ENCODE measurements at regions of chr5 and their contacts with region 1.

Region 1: DNA sequence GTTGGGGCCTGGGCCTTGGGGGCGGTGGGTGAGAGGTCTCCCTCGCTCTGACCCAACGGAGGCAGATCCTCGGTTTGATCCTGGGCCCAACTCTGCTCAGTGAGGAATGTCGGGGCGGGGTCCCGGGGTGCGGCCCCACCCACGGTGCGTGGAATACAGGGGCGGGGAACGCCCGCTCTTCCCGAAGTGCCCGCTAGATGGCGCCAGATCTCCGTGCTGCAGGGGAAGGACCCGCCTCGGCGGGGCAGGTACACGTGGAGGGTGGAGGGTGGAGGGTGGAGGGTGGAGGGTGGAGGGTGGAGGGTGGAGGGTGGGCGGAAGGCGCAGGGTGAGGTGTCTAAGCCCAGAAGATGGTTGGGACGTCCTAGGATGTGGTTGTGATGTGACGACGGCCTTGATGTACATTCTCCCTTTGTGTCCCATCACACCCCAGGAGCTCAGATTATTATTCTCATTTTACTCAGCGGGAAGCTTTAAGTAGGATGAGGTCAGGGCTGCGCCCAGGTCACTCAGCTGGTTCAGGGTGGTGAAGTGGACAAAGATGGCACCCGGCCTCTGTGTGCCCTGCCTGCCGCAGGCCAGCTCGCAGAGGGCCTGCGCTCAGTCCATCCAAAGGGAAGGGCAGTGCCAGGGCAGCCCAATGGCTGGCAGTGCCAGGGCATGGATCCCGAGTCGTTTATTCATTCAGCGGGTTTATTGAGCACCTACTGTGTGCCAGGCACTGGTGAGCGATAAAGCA is 9.4 kb upstream of the RPS14 start:
- DNase-seq: peak; percentile 88
- H3K4me3 ChIP-seq: peak overlapping the region in 2 of 4 donors; percentile 13 to 34
- H3K27ac ChIP-seq: peak overlapping the region in 2 of 4 donors; percentile 3 to 41
- H3K4me1 ChIP-seq: peaks cover 0 to 12% (median 8%) of the 10 kb centered on the region in 4 donors
- H3K27me3 ChIP-seq: no peaks in the 10 kb centered on the region
- CTCF ChIP-seq: peak; percentile 51 to 92 (median 60)
- EP300 ChIP-seq: no peak
- POLR2A ChIP-seq: no peak

Region 2: DNA sequence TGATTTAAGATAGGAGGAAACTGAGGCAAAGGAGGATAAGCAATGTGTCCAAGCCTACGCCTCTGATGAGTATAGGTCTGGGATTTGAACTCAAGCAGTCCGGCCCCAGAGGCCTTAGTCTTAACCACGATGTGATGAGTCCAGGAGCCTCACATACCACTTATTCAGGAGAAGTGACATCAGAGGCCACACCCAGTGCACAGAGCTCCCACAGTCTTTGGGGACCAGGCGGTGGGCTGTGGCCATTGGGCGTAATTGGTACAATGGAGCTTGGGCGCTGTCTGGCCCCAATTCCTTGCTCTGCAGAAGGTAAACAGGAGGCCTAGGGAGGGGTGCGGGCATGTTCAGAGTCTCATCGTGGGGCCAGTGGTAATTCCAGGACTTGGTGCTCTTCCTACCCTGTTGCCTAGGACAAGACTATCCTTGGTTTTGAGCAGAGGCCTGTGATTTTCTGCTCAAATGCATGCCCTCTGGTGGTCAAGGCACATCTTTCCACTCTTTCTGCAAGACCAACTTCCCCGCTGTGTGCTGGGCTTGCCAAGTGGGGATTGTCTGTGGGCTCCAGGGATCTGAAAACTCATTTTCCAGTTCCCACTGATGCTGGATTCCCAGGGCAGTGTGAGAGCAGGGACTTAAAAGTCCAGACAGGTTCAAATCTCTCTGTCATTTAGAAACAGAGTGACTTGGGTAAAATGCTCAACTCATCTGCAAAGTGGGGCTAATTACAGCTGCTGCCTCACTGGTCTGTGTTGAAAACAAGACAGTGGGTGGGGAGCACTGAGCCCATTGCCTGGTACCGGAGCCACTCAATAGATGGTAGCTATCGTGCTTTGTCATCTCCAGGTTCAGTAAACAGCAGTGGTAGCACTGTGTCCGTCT is 64.7 kb after region 1 on chr5:
- intact Hi-C with region 1: loop called (anchors 1 kb)
- DNase-seq: no peak
- H3K4me3 ChIP-seq: no peak overlapping the region
- H3K27ac ChIP-seq: peak overlapping the region; percentile 11 to 31 (median 22)
- H3K4me1 ChIP-seq: peaks cover 0 to 78% (median 54%) of the 10 kb centered on the region in 4 donors
- H3K27me3 ChIP-seq: no peaks in the 10 kb centered on the region
- CTCF ChIP-seq: peak; percentile 49 to 68 (median 64)
- EP300 ChIP-seq: no peak
- POLR2A ChIP-seq: no peak

Region 3: GRCh38 chr5:150544611-150545219 is 85.7 kb after region 1 on chr5:
- intact Hi-C with region 1: loop called (anchors 2 kb)
- DNase-seq: peak; percentile 80
- H3K4me3 ChIP-seq: no peak overlapping the region
- H3K27ac ChIP-seq: no peak overlapping the region
- H3K4me1 ChIP-seq: peaks cover 0 to 24% (median 21%) of the 10 kb centered on the region in 4 donors
- H3K27me3 ChIP-seq: no peaks in the 10 kb centered on the region
- CTCF ChIP-seq: peak; percentile 18 to 83 (median 67)
- EP300 ChIP-seq: no peak
- POLR2A ChIP-seq: no peak

Region 4: DNA sequence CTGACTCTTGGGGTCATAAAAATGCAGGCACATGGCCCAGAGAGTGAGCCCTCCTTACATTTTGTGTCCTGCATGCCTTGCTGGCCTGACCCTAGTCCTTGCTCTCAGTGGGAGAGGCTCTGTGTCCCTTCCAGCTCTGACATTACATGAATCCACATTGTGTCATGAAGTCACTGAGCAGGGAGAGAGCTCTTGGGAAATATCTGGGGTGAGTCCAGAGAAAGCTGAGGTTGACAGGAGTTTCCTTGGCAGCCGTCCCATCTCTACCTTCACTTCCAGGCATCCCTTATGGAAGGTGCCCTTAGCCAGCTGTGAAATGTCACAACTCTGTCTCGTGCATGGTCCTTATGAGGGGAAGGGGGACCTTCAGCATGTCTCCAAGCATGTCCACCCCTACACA is 1091.2 kb after region 1 on chr5:
- intact Hi-C with region 1: no loop called
- DNase-seq: no peak
- H3K4me3 ChIP-seq: no peak overlapping the region
- H3K27ac ChIP-seq: no peak overlapping the region
- H3K4me1 ChIP-seq: no peaks in the 10 kb centered on the region
- H3K27me3 ChIP-seq: no peaks in the 10 kb centered on the region
- CTCF ChIP-seq: no peak
- EP300 ChIP-seq: no peak
- POLR2A ChIP-seq: no peak